ENCODE measurements at regions of chr2 and their contacts with region 1.

Region 1: GRCh38 chr2:11863513-11864328 is 117.3 kb downstream of the LPIN1 start:
- DNase-seq: peak; percentile 89
- ATAC-seq: peak; percentile 94 to 95

Region 2: DNA sequence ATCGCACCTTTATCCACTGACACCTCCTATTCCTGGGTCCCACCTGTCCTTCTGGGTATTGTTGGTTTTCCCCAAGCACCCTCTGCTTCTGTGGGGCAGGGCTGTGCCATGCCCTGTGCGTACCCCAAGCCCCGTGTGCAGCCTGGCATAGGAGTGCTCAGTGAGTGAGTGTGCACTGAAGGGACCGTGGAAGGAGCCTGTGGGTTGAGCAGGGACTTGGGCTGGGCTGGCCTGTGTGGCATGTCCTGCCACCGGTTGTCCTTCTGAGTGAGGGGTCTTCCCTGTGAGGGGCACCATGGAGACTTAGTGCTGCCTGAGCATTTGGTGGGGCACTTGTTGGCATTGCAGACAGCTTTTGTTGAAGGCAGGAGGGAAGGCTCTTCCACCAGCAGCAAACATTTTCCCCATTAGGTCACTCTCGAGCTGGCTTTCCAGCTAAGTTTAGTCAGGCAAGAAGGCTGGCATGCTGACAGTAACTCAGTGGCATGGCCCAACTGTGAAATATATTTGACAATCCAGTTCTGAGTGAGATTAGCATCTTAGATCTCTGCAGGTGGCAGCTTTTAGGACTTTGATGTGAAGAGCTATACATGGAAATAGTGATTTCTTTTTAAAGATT is 52.6 kb before region 1 on chr2:
- intact Hi-C with region 1: no loop called
- DNase-seq: no peak
- ATAC-seq: peak; percentile 22 to 36

Region 3: GRCh38 chr2:12176623-12177454 is 313.1 kb after region 1 on chr2:
- intact Hi-C with region 1: loop called in 1 of 2 experiments (anchors 10 kb)
- DNase-seq: peak; percentile 43
- ATAC-seq: peak; percentile 62 to 91

Region 4: GRCh38 chr2:12931186-12931844 is 1067.6 kb after region 1 on chr2:
- intact Hi-C with region 1: loop called in 1 of 2 experiments (anchors 10 kb)
- DNase-seq: no peak
- ATAC-seq: peak; percentile 86 to 90

Region 5: DNA sequence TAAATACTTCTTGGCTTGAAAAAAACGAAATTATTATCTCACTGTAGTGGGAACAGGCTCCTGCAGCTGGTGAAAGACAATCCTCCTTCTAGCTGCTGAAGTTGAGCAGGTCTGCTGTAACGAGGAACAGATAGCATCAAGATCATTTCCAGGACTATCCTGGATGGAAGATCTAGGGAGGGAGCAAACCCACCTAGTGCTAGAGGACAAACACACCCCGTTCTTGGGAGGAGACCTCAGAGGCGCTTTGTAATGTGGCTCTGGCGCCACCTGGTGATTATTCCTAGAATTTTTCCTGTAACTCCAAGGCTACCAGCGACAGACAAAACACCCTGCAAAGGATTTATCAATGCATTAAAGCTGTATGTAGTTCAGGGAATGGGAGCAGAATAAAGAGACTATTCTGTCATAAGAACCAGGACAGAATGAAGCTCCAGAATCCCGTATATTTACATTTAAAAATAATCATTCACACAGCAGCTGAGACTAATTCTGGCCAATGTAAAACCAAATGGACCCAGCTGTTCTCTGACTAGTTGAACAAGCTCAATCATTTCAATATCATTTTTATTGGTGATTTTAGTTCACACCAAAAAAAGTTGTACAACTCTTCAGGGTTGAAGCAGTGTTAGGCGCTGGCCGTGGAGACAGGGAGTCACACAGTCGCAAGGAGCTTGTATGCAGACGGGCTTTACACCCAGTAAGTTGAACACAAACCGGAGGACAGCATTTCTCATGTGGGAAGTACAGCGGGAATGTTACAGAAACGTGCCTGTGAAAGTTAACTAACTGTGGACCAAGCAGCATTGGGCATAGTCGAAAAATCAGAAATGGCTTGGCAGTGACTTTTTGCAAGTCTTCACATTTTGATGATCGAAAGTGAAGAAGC is 1143.4 kb after region 1 on chr2:
- intact Hi-C with region 1: loop called (anchors 2 to 10 kb)
- DNase-seq: peak; percentile 51
- ATAC-seq: peak; percentile 92 to 94

Measured in left cardiac atrium (tissue), 4 donors.